ENCODE measurements at regions of chr6 and their contacts with region 1.

Region 1: GRCh38 chr6:29834564-29835436 is 7.2 kb downstream of the HLA-G start:
- DNase-seq: no peak
- H3K4me3 ChIP-seq: no peak overlapping the region
- H3K27ac ChIP-seq: no peak overlapping the region
- H3K27me3 ChIP-seq: peaks cover 7% of the 10 kb centered on the region
- CTCF ChIP-seq: peak; percentile 76

Region 2: DNA sequence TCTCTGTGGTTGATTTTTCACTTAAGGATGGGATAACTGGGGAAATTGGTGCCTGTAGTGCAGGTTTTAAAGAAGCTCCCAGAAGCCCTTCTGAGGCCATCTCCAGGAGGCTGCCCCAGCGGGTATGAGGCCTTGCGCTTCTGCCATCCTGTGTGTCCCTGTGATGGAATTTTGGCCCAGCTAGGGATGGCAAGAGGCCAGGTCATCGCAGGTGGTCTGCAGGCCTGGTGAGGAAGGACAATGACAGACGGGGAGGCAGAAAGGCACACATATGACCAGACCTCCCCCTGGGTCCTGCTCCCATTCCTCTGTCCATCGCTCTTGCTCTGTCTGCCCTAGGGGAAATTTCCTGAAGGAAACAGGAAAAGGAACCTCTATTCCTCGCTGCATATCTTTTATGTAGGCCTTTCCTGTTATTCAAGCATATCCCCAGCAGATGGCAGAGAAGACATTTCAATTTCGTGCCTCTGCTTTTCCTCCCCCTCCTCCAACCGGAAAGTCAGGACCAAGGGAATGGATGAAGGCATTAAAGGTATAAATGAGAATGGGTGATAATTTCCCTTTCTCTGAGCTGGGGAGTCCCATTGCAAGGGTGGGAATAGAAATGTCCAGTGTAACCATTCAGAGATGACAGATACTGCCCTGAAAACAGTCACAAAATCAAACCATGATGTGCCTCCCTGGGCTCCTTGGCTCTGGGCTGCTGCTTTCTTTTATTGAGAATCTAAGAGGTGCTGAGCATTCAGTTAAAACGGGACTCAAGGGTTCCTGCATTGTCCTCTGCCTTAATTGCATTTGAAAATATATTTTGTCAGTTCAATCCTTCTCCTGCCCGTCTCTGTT is 129.2 kb before region 1 on chr6:
- CTCF ChIA-PET with region 1: interaction called, 20 read pairs
- POLR2A ChIA-PET with region 1: no interaction called
- DNase-seq: peak; percentile 15
- H3K4me3 ChIP-seq: no peak overlapping the region
- H3K27ac ChIP-seq: no peak overlapping the region
- H3K27me3 ChIP-seq: peaks cover 11% of the 10 kb centered on the region
- CTCF ChIP-seq: peak; percentile 66

Region 3: GRCh38 chr6:29737707-29738630 is 96.8 kb before region 1 on chr6:
- CTCF ChIA-PET with region 1: interaction called, 26 read pairs
- POLR2A ChIA-PET with region 1: no interaction called
- DNase-seq: peak; percentile 15
- H3K4me3 ChIP-seq: no peak overlapping the region
- H3K27ac ChIP-seq: no peak overlapping the region
- H3K27me3 ChIP-seq: peaks cover 2% of the 10 kb centered on the region
- CTCF ChIP-seq: peak; percentile 65